ENCODE measurements at regions of chr18 and their contacts with region 1.

Region 1: DNA sequence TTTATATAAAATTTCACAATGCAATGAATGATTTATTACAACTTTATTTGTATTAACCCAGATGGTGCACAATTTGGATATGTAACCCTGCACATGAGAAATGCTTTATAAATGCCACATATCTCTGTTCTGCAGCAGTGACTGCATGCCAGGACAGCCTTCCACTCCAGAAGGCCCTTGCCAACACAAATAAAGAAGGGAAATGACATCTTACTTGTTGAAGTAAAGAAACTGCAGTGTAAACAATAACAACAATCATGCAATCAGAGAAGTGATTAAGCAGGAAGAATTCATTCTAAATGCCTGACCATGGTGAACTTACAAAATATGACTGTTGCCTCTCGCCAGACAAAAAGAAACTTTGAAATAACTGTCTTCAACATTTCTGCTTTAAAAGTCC is 129.9 kb upstream of the CHST9 start:
- DNase-seq: no peak
- ATAC-seq: no peak
- H3K4me3 ChIP-seq: no peak overlapping the region
- H3K27ac ChIP-seq: no peak overlapping the region
- H3K4me1 ChIP-seq: no peaks in the 10 kb centered on the region
- H3K27me3 ChIP-seq: no peaks in the 10 kb centered on the region
- CTCF ChIP-seq: no peak
- EP300 ChIP-seq: no peak
- POLR2A ChIP-seq: no peak
- RAD21 ChIP-seq: no peak

Region 2: GRCh38 chr18:27274901-27275300 is 40.1 kb before region 1 on chr18:
- CTCF ChIA-PET with region 1: no interaction called
- POLR2A ChIA-PET with region 1: no interaction called
- in situ Hi-C with region 1: no loop called
- intact Hi-C with region 1: loop called (anchors 5 kb)
- DNase-seq: no peak
- ATAC-seq: no peak
- H3K4me3 ChIP-seq: no peak overlapping the region
- H3K27ac ChIP-seq: no peak overlapping the region
- H3K4me1 ChIP-seq: no peaks in the 10 kb centered on the region
- H3K27me3 ChIP-seq: no peaks in the 10 kb centered on the region
- CTCF ChIP-seq: no peak
- EP300 ChIP-seq: no peak
- POLR2A ChIP-seq: no peak
- RAD21 ChIP-seq: no peak

Measured in K562 (cell line).